ENCODE measurements at regions of chr9 and their contacts with region 1.

Region 1: DNA sequence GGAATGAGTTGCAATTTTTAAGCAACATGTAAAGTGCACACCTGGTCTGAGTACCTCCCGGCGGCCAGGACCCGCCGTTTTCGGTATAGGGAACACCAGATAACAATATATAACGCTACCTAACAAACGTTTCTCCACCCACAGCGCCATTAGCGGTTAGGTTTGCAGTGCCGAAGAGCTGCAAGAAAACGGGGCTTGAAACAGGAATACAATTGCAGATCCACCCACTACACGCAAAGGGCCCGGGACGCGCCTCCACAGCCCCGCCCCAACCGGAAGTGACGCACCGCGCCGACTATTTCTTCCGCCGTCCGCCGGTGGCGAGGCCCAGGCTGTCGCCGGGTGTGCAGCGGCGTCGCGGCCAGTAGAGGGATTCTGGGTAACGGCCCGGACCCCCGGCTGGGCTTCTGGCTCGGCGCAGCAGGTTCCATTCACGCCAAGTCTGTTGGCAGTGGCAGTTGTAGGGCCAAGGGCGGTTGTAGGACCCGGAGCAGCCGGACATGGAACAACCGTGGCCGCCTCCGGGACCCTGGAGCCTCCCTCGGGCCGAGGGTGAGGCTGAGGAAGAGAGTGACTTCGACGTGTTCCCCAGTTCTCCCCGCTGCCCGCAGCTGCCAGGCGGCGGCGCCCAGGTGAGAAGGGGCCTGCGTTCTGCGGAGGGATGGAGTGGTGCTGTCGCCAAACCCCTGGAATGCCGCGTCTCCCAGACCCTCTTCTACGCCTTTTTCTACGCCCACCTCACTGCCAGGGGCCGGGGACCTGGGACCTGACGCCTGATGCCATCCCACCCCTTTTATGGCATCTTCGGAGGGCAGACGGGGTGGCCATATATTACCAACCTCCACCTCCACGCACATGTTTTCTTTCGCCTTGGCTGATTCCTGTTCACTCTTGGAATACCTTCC is at the start of gene CDC37L1:
- DNase-seq: peak; percentile 100
- ATAC-seq: peak; percentile 95
- H3K4me3 Mint-ChIP-seq: no peak within 1 kb of the TSS
- H3K27ac Mint-ChIP-seq: no peak within 1 kb of the TSS
- H3K4me1 Mint-ChIP-seq: peaks cover 7% of the 10 kb centered on the region
- H3K27me3 Mint-ChIP-seq: no peaks in the 10 kb centered on the region
- CTCF ChIP-seq: no peak
- total RNA-seq, gene CDC37L1: 12.3 and 14.7 TPM in 2 replicates

Region 2: DNA sequence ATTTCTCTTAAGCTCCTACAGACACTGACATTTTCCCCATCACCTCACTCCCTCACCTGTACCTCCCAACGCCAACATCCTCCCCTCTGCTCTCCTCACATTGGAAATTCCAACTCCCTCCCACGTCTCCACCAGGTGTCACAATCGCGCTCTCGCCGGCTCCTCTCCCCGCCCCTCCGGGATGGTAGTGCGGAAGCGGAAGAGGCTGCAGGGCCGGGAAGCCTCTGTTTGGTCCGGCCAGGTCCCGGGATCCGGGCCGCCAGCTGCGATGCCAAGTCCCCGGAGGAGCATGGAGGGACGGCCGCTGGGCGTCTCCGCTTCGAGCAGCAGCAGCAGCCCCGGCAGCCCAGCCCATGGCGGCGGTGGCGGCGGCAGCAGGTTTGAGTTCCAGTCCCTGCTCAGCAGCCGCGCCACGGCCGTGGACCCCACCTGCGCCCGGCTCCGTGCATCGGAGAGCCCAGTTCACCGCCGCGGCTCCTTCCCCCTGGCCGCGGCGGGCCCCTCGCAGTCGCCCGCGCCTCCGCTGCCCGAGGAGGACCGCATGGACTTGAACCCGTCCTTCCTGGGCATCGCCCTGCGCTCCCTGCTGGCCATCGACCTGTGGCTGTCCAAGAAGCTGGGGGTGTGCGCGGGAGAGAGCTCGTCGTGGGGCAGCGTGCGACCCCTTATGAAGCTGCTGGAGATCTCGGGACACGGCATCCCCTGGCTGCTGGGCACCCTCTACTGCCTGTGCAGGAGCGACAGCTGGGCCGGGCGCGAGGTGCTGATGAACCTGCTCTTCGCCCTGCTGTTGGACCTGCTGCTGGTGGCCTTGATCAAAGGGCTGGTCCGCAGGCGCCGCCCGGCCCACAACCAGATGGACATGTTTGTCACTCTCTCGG is 17.2 kb before region 1 on chr9 and contains the start of gene PLPP6:
- CTCF ChIA-PET with region 1: interaction called, 5 read pairs
- POLR2A ChIA-PET with region 1: interaction called, 21 read pairs
- intact Hi-C with region 1: loop called (anchors 1 kb)
- DNase-seq: peak; percentile 66
- ATAC-seq: peak; percentile 87
- H3K4me3 Mint-ChIP-seq: peak within 1 kb of the TSS; percentile 92
- H3K27ac Mint-ChIP-seq: peak within 1 kb of the TSS; percentile 80
- H3K4me1 Mint-ChIP-seq: peaks cover 47% of the 10 kb centered on the region
- H3K27me3 Mint-ChIP-seq: peaks cover 8% of the 10 kb centered on the region
- CTCF ChIP-seq: no peak
- total RNA-seq, gene PLPP6: 8.5 and 10.2 TPM in 2 replicates

Region 3: DNA sequence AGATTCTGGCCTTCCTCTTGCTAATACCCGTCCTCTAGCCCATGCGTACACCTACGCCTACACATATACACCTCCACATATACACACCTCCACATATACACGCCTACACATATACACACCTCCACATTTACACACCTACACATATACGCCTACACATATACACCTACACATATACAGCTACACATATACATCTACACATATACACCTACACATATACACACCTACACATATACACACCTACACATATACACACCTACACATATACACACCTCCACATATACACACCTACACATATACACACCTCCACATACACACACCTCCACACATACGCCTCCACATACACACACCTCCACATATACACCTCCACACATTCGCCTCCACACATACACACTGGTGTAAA is 34.3 kb after region 1 on chr9:
- CTCF ChIA-PET with region 1: no interaction called
- POLR2A ChIA-PET with region 1: no interaction called
- intact Hi-C with region 1: no loop called
- DNase-seq: no peak
- ATAC-seq: no peak
- H3K4me3 Mint-ChIP-seq: no peak overlapping the region
- H3K27ac Mint-ChIP-seq: no peak overlapping the region
- H3K4me1 Mint-ChIP-seq: peaks cover 4% of the 10 kb centered on the region
- H3K27me3 Mint-ChIP-seq: no peaks in the 10 kb centered on the region
- CTCF ChIP-seq: no peak

Region 4: DNA sequence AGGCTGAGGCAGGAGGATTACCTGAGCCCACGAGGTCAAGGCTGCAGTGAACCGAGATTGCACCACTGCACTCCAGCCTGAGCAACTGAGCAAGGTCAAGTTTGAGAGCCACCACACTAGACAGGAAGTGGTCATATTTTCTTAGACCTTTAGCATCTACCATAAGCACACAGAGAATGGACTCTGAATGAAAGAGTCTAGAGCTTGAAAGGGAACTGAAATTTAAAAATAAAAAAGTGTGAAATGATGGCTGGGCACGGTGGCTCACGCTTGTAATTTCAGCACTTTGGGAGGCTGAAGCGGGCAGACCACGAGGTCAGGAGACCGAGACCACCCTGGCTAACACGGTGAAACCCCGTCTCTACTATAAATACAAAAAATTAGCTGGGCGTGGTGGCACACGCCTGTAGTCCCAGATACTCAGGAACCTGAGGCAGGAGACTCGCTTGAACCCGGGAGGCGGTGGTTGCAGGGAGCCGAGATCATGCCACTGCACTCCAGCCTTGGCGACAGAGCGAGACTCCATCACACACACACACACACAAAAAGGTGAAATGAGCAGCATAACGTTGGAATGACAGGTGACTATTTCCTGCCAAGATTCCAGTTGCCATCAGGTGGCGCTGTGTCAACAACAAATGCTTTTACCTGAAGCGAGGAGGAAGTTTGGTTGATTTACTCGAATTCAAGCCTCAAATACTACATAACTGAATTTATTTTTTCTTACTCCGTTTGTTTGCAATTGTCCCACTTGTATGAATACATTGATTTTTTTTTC is 82.8 kb after region 1 on chr9:
- CTCF ChIA-PET with region 1: no interaction called
- POLR2A ChIA-PET with region 1: no interaction called
- intact Hi-C with region 1: no loop called
- DNase-seq: peak; percentile 61
- ATAC-seq: peak; percentile 70
- H3K4me3 Mint-ChIP-seq: peak overlapping the region; percentile 72
- H3K27ac Mint-ChIP-seq: peak overlapping the region; percentile 54
- H3K4me1 Mint-ChIP-seq: peaks cover 24% of the 10 kb centered on the region
- H3K27me3 Mint-ChIP-seq: no peaks in the 10 kb centered on the region
- CTCF ChIP-seq: no peak

Region 5: GRCh38 chr9:4792572-4793458 is 113.3 kb after region 1 on chr9 and contains the start of gene RCL1:
- CTCF ChIA-PET with region 1: no interaction called
- POLR2A ChIA-PET with region 1: interaction called, 5 read pairs
- intact Hi-C with region 1: loop called (anchors 1 kb)
- DNase-seq: peak; percentile 97
- ATAC-seq: peak; percentile 93
- H3K4me3 Mint-ChIP-seq: peak within 1 kb of the TSS; percentile 97
- H3K27ac Mint-ChIP-seq: peak within 1 kb of the TSS; percentile 96
- H3K4me1 Mint-ChIP-seq: peaks cover 40% of the 10 kb centered on the region
- H3K27me3 Mint-ChIP-seq: peaks cover 2% of the 10 kb centered on the region
- CTCF ChIP-seq: no peak
- total RNA-seq, gene RCL1: 23.9 and 26.0 TPM in 2 replicates

Region 6: GRCh38 chr9:5262481-5262880 is 583.0 kb after region 1 on chr9:
- CTCF ChIA-PET with region 1: no interaction called
- POLR2A ChIA-PET with region 1: no interaction called
- intact Hi-C with region 1: no loop called
- DNase-seq: no peak
- ATAC-seq: no peak
- H3K4me3 Mint-ChIP-seq: no peak overlapping the region
- H3K27ac Mint-ChIP-seq: no peak overlapping the region
- H3K4me1 Mint-ChIP-seq: no peaks in the 10 kb centered on the region
- H3K27me3 Mint-ChIP-seq: no peaks in the 10 kb centered on the region
- CTCF ChIP-seq: no peak

Region 7: DNA sequence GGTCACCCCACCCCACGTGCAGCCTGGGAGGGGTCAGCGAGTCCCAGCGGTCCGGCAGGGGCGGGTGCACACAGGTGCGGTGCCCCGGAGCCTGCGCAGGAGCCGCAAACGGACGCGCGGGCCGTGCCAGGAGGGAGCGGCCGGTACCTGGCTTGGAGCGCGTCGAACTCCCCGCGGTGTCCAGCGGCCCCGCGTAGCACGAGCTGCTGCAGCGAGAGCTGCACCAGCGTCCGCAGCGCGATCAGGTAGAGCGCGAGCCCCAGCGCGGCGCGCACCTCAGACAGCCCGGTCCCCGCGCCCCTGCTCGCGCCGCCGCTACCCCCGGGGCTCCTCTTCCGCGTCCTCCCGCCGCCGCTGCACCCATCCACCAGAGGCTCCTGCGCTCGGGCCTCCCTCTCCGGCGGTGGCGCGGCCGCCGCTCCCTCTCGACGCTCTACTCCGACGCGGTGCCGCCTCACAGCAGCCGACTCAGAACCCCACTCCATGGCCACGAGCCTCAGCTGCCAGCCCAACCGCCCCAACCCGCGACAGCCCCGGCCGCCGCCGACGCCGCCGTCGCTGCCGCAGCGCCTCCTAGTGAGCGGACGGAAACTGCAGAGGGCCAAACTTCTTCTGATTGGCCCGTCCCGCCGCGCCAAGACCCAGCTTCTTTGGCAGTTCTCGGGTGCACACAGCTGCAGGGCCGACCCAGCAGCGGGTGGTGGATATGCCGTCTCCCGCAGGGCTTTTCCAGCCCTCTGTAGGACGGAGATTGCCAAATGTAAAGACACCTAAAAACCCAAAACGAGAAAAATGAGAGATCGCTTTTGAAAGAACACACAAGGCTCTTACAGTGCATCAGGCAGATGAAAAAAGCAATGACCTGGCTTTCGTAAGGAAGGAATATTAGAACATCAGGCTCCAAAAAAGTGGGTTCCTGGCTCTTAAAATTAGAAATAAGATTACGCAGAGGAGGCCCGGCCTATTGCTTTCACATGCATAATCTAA is 1153.3 kb after region 1 on chr9 and contains the start of gene ERMP1:
- CTCF ChIA-PET with region 1: no interaction called
- POLR2A ChIA-PET with region 1: no interaction called
- intact Hi-C with region 1: loop called (anchors 5 kb)
- DNase-seq: peak; percentile 88
- ATAC-seq: peak; percentile 88
- H3K4me3 Mint-ChIP-seq: peak within 1 kb of the TSS; percentile 90
- H3K27ac Mint-ChIP-seq: peak within 1 kb of the TSS; percentile 83
- H3K4me1 Mint-ChIP-seq: peaks cover 33% of the 10 kb centered on the region
- H3K27me3 Mint-ChIP-seq: no peaks in the 10 kb centered on the region
- CTCF ChIP-seq: peak; percentile 22
- total RNA-seq, gene ERMP1: 7.3 and 7.5 TPM in 2 replicates

Region 8: DNA sequence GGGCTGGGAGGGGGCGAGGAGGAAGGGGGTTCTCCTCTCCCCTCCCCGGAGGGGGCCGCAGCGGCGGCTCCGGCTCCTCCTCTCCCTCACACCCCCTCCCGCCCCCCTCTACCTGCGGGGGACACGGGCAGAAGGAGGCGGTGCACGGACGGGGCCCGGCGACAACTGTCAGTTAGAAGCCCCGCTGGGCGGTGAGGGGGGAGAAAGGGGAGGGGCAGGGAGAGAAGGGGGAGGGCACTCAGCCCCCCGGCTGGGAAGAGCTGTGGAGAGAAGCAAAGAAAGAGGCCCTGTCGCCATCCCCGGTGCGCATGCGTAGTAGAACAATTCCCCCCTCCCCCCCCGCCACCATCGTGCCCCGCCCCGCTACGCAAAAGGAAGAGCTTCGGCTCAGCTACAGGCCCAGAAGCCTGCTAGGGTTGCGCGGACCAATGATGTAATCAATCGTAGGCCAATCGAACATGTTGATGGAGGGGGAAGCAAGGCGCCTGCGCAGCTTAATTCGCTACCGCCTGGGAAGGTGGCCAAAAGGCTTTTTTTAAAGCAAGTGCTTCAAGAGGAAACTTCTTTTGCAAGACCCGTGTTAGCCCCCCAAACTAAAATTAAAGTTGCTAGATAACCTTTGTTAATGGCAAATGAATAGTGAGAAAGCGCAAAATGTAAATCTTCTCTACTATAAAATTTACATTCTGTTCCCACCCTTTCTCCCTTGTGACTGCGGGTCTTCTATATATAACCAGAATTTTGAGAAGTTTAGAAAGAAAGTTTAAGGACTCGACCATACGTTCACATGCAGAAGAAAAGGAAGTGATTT is 1328.9 kb after region 1 on chr9:
- CTCF ChIA-PET with region 1: no interaction called
- POLR2A ChIA-PET with region 1: interaction called, 3 read pairs
- intact Hi-C with region 1: loop called (anchors 5 kb)
- DNase-seq: peak; percentile 82
- ATAC-seq: peak; percentile 75
- H3K4me3 Mint-ChIP-seq: peak overlapping the region; percentile 85
- H3K27ac Mint-ChIP-seq: peak overlapping the region; percentile 87
- H3K4me1 Mint-ChIP-seq: peaks cover 57% of the 10 kb centered on the region
- H3K27me3 Mint-ChIP-seq: no peaks in the 10 kb centered on the region
- CTCF ChIP-seq: no peak

Measured in activated B cell treated with CpG ODN at 0.5 μM for 24 hours (primary cell).